Activated CD4-positive, alpha-beta T cell treated with anti-CD3 and anti-CD28 coated beads, Interleukin-2, amount 10 ng/mL, durations not matched to agents 24 days and 14 days (primary cell): ENCODE measurements at regions of chr14 and their contacts with region 1.

Region 1: GRCh38 chr14:22483863-22484593 is 105.0 kb downstream of the DAD1 start:
- DNase-seq: peak; percentile 63
- H3K4me3 Mint-ChIP-seq: peak overlapping the region; percentile 87
- H3K27ac Mint-ChIP-seq: peak overlapping the region; percentile 99
- H3K4me1 Mint-ChIP-seq: peaks cover 5% of the 10 kb centered on the region
- H3K27me3 Mint-ChIP-seq: no peaks in the 10 kb centered on the region

Region 2: GRCh38 chr14:21997300-21997699 is 486.7 kb before region 1 on chr14:
- intact Hi-C with region 1: loop called (anchors 5 kb)
- DNase-seq: peak; percentile 82
- H3K4me3 Mint-ChIP-seq: peak overlapping the region; percentile 95
- H3K27ac Mint-ChIP-seq: peak overlapping the region; percentile 97
- H3K4me1 Mint-ChIP-seq: peaks cover 12% of the 10 kb centered on the region
- H3K27me3 Mint-ChIP-seq: no peaks in the 10 kb centered on the region

Region 3: DNA sequence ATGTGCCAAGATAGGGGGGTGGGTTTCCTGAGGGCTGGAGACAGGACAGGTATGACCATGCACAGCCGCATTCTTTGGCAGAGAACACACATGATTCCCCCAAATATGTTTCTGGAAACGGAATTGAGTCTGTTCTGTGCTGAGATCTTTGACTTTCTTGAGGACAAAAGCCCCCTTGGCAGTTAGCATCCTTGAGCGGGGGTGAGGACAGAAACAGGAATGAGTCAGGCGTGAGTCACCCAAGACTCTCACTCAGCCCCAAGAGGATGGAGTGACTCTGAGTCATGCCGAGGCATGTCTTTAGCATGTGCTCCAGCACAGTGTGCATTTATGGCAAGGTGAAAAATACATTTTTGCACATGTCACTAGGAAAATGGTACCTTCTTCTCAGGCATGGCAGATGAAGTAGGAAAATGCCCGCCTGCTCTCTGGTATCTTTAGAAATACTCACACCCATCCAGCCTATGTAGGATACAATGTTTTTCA is 52.9 kb after region 1 on chr14:
- intact Hi-C with region 1: no loop called
- DNase-seq: peak; percentile 93
- H3K4me3 Mint-ChIP-seq: peak overlapping the region; percentile 84
- H3K27ac Mint-ChIP-seq: peak overlapping the region; percentile 93
- H3K4me1 Mint-ChIP-seq: peaks cover 89% of the 10 kb centered on the region
- H3K27me3 Mint-ChIP-seq: no peaks in the 10 kb centered on the region